Activated CD4-positive, alpha-beta T cell treated with anti-CD3 and anti-CD28 coated beads for 36 hours (primary cell): ENCODE measurements at regions of chr4 and their contacts with region 1.

Region 1: GRCh38 chr4:36399762-36400353 is 118.4 kb downstream of the DTHD1 start:
- DNase-seq: peak; percentile 69
- ATAC-seq: peak; percentile 77
- H3K4me3 Mint-ChIP-seq: no peak overlapping the region
- H3K27ac Mint-ChIP-seq: no peak overlapping the region
- H3K4me1 Mint-ChIP-seq: peaks cover 26% of the 10 kb centered on the region
- H3K27me3 Mint-ChIP-seq: no peaks in the 10 kb centered on the region

Region 2: DNA sequence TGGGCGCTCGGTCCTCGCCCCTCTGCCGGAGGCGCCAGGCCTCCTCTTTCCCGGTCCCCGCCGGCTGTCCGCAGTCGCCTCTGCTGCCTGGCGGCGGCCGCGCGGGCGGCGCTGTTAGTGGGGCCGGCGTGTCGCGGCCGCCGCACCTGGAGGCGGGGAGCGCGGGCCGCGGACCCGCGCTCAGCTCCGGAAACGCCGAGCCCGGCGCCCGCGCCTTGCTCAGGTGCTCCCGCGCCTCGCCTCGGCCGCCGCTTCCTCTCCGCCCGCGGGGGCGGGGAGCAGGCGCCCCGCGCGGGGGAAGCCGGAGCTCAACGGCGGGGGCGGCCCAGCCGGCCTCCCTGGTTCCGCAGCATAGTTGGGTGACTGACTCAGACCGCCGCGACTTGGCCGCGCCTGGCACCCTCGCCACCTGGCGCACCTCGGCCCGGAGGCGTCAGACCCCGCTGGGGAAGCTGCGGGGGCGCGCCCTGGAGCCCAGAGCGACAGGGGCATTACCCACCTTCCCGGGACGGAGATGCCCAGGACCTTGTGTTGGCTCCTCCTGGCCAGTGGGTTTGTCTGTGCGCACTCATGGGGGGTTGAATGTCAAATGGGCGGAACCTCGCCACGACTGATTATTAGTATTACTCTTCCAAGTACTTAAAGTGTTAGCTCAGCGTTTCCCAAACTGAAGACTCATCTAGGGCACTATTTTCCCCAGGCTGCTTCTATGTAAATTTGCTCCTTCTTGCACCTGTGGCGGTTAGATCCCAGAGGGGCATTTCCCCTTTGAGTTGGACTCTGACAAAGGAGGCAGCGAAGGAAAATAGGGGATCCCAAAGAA is 155.4 kb before region 1 on chr4 and contains the start of gene ARAP2:
- CTCF ChIA-PET with region 1: interaction called, 8 read pairs
- POLR2A ChIA-PET with region 1: interaction called, 4 read pairs
- intact Hi-C with region 1: loop called (anchors 2 to 5 kb)
- DNase-seq: peak; percentile 84
- ATAC-seq: peak; percentile 72
- H3K4me3 Mint-ChIP-seq: peak within 1 kb of the TSS; percentile 87
- H3K27ac Mint-ChIP-seq: peak within 1 kb of the TSS; percentile 93
- H3K4me1 Mint-ChIP-seq: peaks cover 36% of the 10 kb centered on the region
- H3K27me3 Mint-ChIP-seq: no peaks in the 10 kb centered on the region
- total RNA-seq, gene ARAP2: 40.0 to 42.5 TPM

Region 3: GRCh38 chr4:36255577-36255976 is 144.3 kb before region 1 on chr4:
- CTCF ChIA-PET with region 1: interaction called, 13 read pairs
- POLR2A ChIA-PET with region 1: no interaction called
- intact Hi-C with region 1: loop called in 1 of 2 experiments (anchors 1 kb)
- DNase-seq: peak; percentile 73
- ATAC-seq: peak; percentile 87
- H3K4me3 Mint-ChIP-seq: peak overlapping the region; percentile 50
- H3K27ac Mint-ChIP-seq: peak overlapping the region; percentile 93
- H3K4me1 Mint-ChIP-seq: peaks cover 39% of the 10 kb centered on the region
- H3K27me3 Mint-ChIP-seq: no peaks in the 10 kb centered on the region

Region 4: DNA sequence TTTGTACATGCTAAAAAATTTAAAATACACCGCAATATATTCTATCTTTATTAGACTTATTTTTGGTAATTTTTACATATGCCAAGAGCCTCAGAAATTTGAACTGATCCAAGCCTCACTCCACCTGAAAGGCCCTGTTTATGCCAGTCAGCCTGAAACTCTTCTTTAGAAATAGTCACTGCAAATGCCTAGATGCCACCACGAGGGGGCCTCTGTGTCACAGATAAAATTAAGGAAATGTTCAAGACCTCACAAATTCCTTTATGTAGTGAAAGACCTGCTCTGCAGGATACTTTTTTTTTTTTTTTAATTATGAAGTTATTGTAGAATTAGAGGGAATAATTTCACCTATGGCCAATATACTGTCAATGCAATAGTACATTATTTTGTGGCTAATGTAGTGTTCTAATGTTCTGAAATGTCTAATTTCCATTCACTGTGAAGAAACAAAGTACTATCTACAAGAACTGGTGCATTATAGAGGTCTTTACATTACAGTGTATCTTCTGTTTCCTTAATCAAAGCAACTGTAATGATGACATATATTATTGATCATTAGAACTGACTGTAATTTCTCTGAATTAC is 48.7 kb before region 1 on chr4:
- CTCF ChIA-PET with region 1: interaction called, 100 read pairs
- POLR2A ChIA-PET with region 1: no interaction called
- intact Hi-C with region 1: loop called (anchors 1 kb)
- DNase-seq: peak; percentile 87
- ATAC-seq: peak; percentile 58
- H3K4me3 Mint-ChIP-seq: no peak overlapping the region
- H3K27ac Mint-ChIP-seq: no peak overlapping the region
- H3K4me1 Mint-ChIP-seq: peaks cover 23% of the 10 kb centered on the region
- H3K27me3 Mint-ChIP-seq: peaks cover 3% of the 10 kb centered on the region

Region 5: DNA sequence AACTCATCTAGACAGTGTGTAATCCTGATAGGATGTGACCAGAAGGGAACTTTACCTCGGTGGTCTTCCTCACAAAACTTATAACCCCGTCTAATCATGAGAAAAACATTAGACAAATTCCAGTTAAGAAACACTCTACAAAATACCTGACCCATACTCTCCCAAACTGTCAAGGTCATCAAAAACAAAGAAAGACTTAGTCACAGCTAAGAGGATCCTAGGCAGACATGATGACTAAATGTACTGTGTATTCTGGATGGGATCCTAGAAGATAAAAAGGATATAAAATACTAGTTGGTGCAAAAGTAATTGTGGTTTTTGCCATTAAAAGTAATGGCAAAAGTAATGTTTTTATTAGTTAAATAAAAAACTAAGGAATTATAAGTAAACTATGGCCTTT is 36.8 kb before region 1 on chr4:
- CTCF ChIA-PET with region 1: interaction called, 17 read pairs
- POLR2A ChIA-PET with region 1: interaction called, 3 read pairs
- intact Hi-C with region 1: no loop called
- DNase-seq: no peak
- ATAC-seq: no peak
- H3K4me3 Mint-ChIP-seq: no peak overlapping the region
- H3K27ac Mint-ChIP-seq: no peak overlapping the region
- H3K4me1 Mint-ChIP-seq: no peaks in the 10 kb centered on the region
- H3K27me3 Mint-ChIP-seq: no peaks in the 10 kb centered on the region

Region 6: GRCh38 chr4:36374836-36375401 is 24.9 kb before region 1 on chr4:
- CTCF ChIA-PET with region 1: no interaction called
- POLR2A ChIA-PET with region 1: no interaction called
- intact Hi-C with region 1: no loop called
- DNase-seq: no peak
- ATAC-seq: no peak
- H3K4me3 Mint-ChIP-seq: no peak overlapping the region
- H3K27ac Mint-ChIP-seq: no peak overlapping the region
- H3K4me1 Mint-ChIP-seq: no peaks in the 10 kb centered on the region
- H3K27me3 Mint-ChIP-seq: no peaks in the 10 kb centered on the region

Region 7: GRCh38 chr4:36385951-36386571 is 13.8 kb before region 1 on chr4:
- CTCF ChIA-PET with region 1: interaction called, 15 read pairs
- POLR2A ChIA-PET with region 1: no interaction called
- intact Hi-C with region 1: loop called in 1 of 2 experiments (anchors 2 kb)
- DNase-seq: peak; percentile 32
- ATAC-seq: peak; percentile 97
- H3K4me3 Mint-ChIP-seq: no peak overlapping the region
- H3K27ac Mint-ChIP-seq: peak overlapping the region; percentile 86
- H3K4me1 Mint-ChIP-seq: peaks cover 29% of the 10 kb centered on the region
- H3K27me3 Mint-ChIP-seq: no peaks in the 10 kb centered on the region

Region 8: DNA sequence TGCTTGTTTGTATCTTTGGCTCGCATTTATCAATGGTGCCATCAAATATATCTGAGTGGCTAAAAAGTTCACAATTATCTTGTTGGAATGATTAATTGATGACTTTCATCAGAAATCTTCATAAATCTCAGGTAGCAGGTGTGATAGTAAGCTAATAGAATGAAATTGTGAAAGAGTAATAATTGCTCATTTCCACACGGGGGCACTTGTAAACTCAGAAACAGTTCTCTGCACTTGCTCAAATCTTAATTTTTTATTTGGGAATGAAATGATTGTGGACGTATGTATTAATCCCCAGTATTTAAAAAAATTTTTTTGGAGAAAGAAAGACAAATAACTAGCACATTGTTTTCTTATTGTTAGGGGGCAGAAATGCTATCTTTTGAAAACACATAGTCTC is 14.4 kb after region 1 on chr4:
- CTCF ChIA-PET with region 1: interaction called, 11 read pairs
- POLR2A ChIA-PET with region 1: no interaction called
- intact Hi-C with region 1: no loop called
- DNase-seq: no peak
- ATAC-seq: no peak
- H3K4me3 Mint-ChIP-seq: no peak overlapping the region
- H3K27ac Mint-ChIP-seq: no peak overlapping the region
- H3K4me1 Mint-ChIP-seq: no peaks in the 10 kb centered on the region
- H3K27me3 Mint-ChIP-seq: peaks cover 27% of the 10 kb centered on the region